MCF 10A (cell line): ENCODE measurements at regions of chr12 and their contacts with region 1.

Region 1: DNA sequence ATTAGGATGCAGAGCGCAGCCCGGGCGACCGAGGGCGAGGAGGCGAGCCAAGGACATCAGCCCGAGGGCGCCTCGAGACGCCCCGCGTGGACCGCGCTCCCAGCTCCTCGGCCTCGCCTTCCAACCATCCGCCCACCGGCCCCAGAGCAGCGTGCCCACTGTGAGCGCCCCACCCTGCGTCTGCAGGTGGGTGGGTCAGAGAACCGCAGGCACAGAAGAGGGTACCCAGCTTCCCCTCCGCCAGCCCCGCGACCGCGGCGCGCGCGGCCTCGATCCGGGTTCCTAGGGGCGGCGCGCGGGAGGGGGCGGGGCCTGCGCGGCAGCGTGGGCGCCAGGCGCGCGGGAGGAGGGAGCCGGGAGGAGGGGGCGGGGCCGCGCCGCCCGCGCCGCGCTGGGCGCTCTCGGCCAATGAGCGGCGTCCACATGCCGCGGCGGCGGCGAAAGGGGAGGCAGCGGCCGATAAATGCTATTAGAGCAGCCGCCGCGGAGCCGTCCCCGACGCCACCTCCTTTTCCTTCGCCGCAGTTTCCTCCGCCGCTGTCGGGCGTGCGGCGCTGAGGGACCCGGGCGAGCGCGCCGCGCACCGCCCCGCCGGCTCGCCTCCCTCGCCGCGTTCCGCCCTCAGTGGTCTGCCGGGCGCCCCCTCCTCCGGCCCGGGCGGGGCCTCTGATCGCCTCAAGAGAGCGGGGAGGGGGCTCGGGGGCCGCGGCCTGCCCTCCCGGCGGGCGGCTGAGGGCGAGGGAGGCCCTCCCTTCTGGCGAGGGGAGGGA is at the start of gene ATP2A2:
- DNase-seq: peak; percentile 92
- H3K4me3 Mint-ChIP-seq: peak within 1 kb of the TSS; percentile 87
- H3K27ac Mint-ChIP-seq: peak within 1 kb of the TSS; percentile 85
- H3K4me1 Mint-ChIP-seq: peaks cover 22% of the 10 kb centered on the region
- H3K27me3 Mint-ChIP-seq: no peaks in the 10 kb centered on the region
- CTCF ChIP-seq: no peak
- total RNA-seq, gene ATP2A2: 272 and 308 TPM in 2 replicates

Region 2: DNA sequence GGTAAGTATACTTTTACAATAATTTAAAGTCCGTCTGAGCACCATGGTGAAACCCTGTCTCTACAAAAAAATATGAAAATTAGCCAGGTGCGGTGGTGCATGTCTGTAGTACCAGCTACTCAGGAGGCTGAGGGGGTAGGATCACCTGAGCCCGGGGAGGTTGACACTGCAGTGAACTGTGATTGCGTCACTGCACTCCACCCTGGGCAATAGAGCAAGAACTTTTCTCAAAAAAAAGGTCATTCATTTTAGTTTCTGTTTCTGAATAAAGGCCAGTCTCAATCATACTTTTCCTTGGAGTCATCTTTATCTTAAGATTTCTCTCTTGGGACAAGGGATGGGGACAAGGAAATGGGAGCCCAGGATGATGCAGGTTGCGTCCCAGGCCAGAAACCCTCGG is 268.8 kb before region 1 on chr12:
- CTCF ChIA-PET with region 1: no interaction called
- POLR2A ChIA-PET with region 1: no interaction called
- intact Hi-C with region 1: no loop called
- DNase-seq: no peak
- H3K4me3 Mint-ChIP-seq: no peak overlapping the region
- H3K27ac Mint-ChIP-seq: peak overlapping the region; percentile 55
- H3K4me1 Mint-ChIP-seq: peaks cover 7% of the 10 kb centered on the region
- H3K27me3 Mint-ChIP-seq: no peaks in the 10 kb centered on the region
- CTCF ChIP-seq: no peak

Region 3: DNA sequence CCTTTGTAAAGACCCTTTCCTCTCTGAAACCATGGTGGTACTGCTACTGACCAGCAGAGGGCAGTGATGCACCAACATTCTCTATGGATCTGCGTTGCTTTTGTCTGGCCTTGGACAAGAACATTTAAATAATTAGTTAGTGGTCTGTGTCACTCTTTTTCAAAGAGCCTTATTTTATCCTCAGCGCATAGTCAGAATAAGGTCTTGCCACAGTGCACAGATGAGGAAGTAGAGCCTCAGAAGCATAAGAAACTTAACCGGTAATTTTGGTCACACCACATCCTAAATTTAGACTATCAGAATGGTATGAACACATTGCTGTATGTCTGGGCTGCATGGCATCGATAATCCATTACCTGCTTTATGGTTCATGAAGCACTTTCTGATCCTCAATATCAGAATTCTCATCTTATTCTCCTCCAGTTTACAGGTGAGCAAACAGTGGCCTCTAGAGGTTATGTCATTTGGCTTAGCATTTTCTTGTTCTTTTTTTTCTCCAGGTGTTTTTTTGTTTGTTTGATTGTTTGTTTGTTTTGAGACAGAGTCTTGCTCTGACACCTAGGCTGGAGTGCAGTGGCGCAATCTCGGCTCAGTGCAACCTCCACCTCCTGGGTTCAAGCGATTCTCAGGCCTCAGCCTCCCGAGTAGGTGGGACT is 180.5 kb before region 1 on chr12:
- CTCF ChIA-PET with region 1: interaction called, 6 read pairs
- POLR2A ChIA-PET with region 1: interaction called, 4 read pairs
- intact Hi-C with region 1: loop called (anchors 2 kb)
- DNase-seq: peak; percentile 78
- H3K4me3 Mint-ChIP-seq: no peak overlapping the region
- H3K27ac Mint-ChIP-seq: no peak overlapping the region
- H3K4me1 Mint-ChIP-seq: peaks cover 7% of the 10 kb centered on the region
- H3K27me3 Mint-ChIP-seq: no peaks in the 10 kb centered on the region
- CTCF ChIP-seq: peak; percentile 85

Region 4: GRCh38 chr12:110124184-110124995 is 156.6 kb before region 1 on chr12 and contains the start of gene IFT81:
- CTCF ChIA-PET with region 1: no interaction called
- POLR2A ChIA-PET with region 1: interaction called, 4 read pairs
- intact Hi-C with region 1: loop called (anchors 5 kb)
- DNase-seq: peak; percentile 92
- H3K4me3 Mint-ChIP-seq: peak within 1 kb of the TSS; percentile 82
- H3K27ac Mint-ChIP-seq: peak within 1 kb of the TSS; percentile 92
- H3K4me1 Mint-ChIP-seq: peaks cover 13% of the 10 kb centered on the region
- H3K27me3 Mint-ChIP-seq: no peaks in the 10 kb centered on the region
- CTCF ChIP-seq: no peak
- total RNA-seq, gene IFT81: 8.5 and 8.7 TPM in 2 replicates

Region 5: GRCh38 chr12:110245369-110245772 is 35.6 kb before region 1 on chr12:
- CTCF ChIA-PET with region 1: interaction called, 6 read pairs
- POLR2A ChIA-PET with region 1: interaction called, 112 read pairs
- intact Hi-C with region 1: loop called (anchors 5 kb)
- DNase-seq: peak; percentile 54
- H3K4me3 Mint-ChIP-seq: no peak overlapping the region
- H3K27ac Mint-ChIP-seq: no peak overlapping the region
- H3K4me1 Mint-ChIP-seq: peaks cover 15% of the 10 kb centered on the region
- H3K27me3 Mint-ChIP-seq: no peaks in the 10 kb centered on the region
- CTCF ChIP-seq: peak; percentile 28

Region 6: GRCh38 chr12:110270125-110270962 is 10.6 kb before region 1 on chr12:
- CTCF ChIA-PET with region 1: interaction called, 13 read pairs
- POLR2A ChIA-PET with region 1: interaction called, 120 read pairs
- intact Hi-C with region 1: no loop called
- DNase-seq: peak; percentile 86
- H3K4me3 Mint-ChIP-seq: peak overlapping the region; percentile 60
- H3K27ac Mint-ChIP-seq: peak overlapping the region; percentile 68
- H3K4me1 Mint-ChIP-seq: peaks cover 30% of the 10 kb centered on the region
- H3K27me3 Mint-ChIP-seq: no peaks in the 10 kb centered on the region
- CTCF ChIP-seq: no peak

Region 7: DNA sequence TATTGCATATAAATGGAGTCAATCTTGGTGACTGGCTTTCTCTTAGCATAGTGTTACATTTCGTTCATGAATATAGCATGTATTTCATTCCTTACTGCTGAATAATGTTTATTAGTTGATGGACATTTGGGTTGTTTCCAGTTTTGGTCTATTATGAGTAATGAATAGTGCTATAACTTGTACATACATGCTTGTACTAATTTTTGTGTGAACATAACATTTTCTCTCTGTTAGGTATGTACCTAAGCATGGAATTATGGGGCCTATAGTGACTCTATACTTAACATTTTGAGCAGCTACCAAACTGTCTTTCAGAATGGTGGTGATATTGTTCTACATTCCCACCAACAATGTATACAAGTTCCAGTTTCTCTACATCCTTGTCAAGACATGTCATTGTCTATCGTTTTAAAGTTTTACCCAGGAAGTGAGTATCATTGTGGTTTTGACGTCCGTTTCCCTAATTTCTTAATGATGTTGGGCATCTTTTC is 23.1 kb after region 1 on chr12:
- CTCF ChIA-PET with region 1: interaction called, 3 read pairs
- POLR2A ChIA-PET with region 1: interaction called, 15 read pairs
- intact Hi-C with region 1: no loop called
- DNase-seq: peak; percentile 87
- H3K4me3 Mint-ChIP-seq: peak overlapping the region; percentile 58
- H3K27ac Mint-ChIP-seq: peak overlapping the region; percentile 85
- H3K4me1 Mint-ChIP-seq: peaks cover 45% of the 10 kb centered on the region
- H3K27me3 Mint-ChIP-seq: no peaks in the 10 kb centered on the region
- CTCF ChIP-seq: no peak

Region 8: DNA sequence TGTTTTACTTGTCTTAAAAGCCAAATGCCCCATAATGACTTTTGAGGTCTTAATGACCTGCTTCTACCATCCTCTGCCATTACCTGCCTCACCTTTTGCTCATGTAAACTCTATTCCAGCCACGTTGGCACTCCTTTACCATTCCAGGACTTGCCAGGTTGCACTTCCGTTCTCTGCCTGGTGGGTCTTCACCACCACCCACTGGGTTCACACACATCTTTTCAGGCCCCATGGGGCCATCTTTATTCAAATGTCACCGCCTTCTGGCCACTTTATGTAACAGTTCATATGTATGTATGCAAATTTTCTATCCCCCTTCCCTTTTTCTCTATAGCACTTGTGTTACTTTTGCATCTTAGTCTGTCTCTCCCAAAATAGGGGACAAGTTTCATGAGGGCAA is 57.8 kb after region 1 on chr12:
- CTCF ChIA-PET with region 1: interaction called, 5 read pairs
- POLR2A ChIA-PET with region 1: interaction called, 16 read pairs
- intact Hi-C with region 1: loop called (anchors 2 kb)
- DNase-seq: peak; percentile 30
- H3K4me3 Mint-ChIP-seq: no peak overlapping the region
- H3K27ac Mint-ChIP-seq: peak overlapping the region; percentile 47
- H3K4me1 Mint-ChIP-seq: peaks cover 24% of the 10 kb centered on the region
- H3K27me3 Mint-ChIP-seq: no peaks in the 10 kb centered on the region
- CTCF ChIP-seq: peak; percentile 9